PC-3 (cell line): ENCODE measurements at regions of chr4 and their contacts with region 1.

Region 1: GRCh38 chr4:94757192-94758139 is at the start of gene BMPR1B:
- DNase-seq: peak; percentile 65
- ATAC-seq: peak; percentile 10; the same call in 1 of the 2 replicates
- H3K4me3 ChIP-seq: peak within 1 kb of the TSS; percentile 94
- H3K27ac ChIP-seq: peak within 1 kb of the TSS; percentile 78
- H3K4me1 ChIP-seq: peaks cover 23% of the 10 kb centered on the region
- H3K27me3 ChIP-seq: no peaks in the 10 kb centered on the region
- CTCF ChIP-seq: no peak
- total RNA-seq, gene BMPR1B: 5.0 and 7.1 TPM in 2 replicates

Region 2: DNA sequence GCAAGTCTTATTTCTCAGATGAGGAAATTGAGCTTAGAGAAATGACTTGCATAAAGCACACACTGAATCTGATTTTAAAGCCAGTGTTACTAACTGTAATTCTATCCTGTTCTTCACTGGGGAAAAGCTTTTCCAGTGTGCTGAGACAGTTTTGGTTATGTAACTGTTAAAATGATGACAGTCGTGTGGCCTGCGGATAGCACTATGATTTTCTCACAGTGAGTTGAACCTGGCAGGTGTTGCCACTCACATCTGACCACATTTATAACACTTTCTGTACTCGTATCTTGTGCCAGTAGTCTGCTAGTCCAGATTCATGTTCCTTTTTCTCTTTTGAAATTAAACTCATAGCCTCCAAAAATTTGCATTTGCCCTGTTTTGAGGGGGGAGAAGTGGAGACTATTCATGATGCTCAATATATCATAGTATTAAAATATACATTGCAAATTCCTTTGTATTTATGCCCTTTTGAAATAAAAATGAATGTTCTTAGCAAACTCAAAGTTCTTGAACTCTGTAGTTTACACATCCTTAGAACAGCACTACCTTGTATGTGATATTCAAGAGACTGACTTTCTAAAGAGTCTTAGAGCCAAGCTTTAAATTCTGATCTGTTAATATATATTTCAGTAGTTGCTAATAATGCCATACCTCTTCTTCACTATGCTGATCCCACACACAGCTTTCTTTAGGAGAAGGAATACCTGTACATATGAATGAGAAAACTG is 173.4 kb before region 1 on chr4:
- CTCF ChIA-PET with region 1: no interaction called
- POLR2A ChIA-PET with region 1: no interaction called
- intact Hi-C with region 1: no loop called
- DNase-seq: no peak
- ATAC-seq: no peak
- H3K4me3 ChIP-seq: no peak overlapping the region
- H3K27ac ChIP-seq: no peak overlapping the region
- H3K4me1 ChIP-seq: peaks cover 10% of the 10 kb centered on the region
- H3K27me3 ChIP-seq: no peaks in the 10 kb centered on the region
- CTCF ChIP-seq: no peak

Region 3: GRCh38 chr4:94814237-94814636 is 56.8 kb after region 1 on chr4:
- CTCF ChIA-PET with region 1: no interaction called
- POLR2A ChIA-PET with region 1: no interaction called
- intact Hi-C with region 1: no loop called
- DNase-seq: no peak
- ATAC-seq: no peak
- H3K4me3 ChIP-seq: no peak overlapping the region
- H3K27ac ChIP-seq: no peak overlapping the region
- H3K4me1 ChIP-seq: no peaks in the 10 kb centered on the region
- H3K27me3 ChIP-seq: no peaks in the 10 kb centered on the region
- CTCF ChIP-seq: no peak

Region 4: GRCh38 chr4:94833394-94833793 is 75.9 kb after region 1 on chr4:
- CTCF ChIA-PET with region 1: no interaction called
- POLR2A ChIA-PET with region 1: no interaction called
- intact Hi-C with region 1: no loop called
- DNase-seq: no peak
- ATAC-seq: no peak
- H3K4me3 ChIP-seq: no peak overlapping the region
- H3K27ac ChIP-seq: no peak overlapping the region
- H3K4me1 ChIP-seq: peaks cover 10% of the 10 kb centered on the region; the same call in 1 of the 2 replicates
- H3K27me3 ChIP-seq: no peaks in the 10 kb centered on the region
- CTCF ChIP-seq: no peak

Region 5: DNA sequence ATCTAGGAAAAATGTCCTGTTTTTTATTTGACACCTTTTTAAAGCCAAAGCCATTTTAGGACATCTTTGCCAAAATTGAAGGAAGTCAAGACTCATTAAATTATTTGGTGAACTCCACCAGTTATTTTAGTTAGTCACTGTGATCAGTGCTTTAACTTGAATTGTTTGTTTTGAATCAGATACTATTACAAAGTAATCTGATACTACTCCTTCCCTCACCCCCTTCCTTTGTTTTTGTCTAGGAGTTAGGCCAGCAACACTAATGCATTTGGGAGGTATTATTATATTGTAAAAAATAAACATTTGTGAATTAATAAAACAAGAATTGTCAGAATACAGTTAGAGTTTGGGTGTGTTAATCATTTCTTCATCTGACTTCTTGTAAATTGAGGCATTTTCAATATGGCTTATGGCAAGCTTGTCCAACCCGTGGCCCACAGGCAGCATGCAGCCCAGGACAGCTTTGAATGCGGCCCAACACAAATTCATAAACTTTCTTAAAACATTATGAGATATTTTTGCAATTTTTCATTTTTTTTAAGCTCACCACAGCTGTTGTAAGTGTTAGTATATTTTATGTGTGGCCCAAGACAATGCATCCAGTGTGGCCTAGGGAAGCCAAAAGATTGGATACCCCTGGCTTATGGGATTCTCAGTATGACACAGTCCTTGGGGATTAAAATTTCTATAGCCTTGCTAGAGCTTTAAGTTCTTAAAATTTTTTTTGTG is 182.5 kb after region 1 on chr4:
- CTCF ChIA-PET with region 1: no interaction called
- POLR2A ChIA-PET with region 1: no interaction called
- intact Hi-C with region 1: loop called (anchors 1 kb)
- DNase-seq: peak; percentile 68
- ATAC-seq: peak; percentile 86
- H3K4me3 ChIP-seq: no peak overlapping the region
- H3K27ac ChIP-seq: peak overlapping the region; percentile 52
- H3K4me1 ChIP-seq: peaks cover 35% of the 10 kb centered on the region
- H3K27me3 ChIP-seq: no peaks in the 10 kb centered on the region
- CTCF ChIP-seq: no peak

Region 6: GRCh38 chr4:94976371-94977011 is 219.0 kb after region 1 on chr4:
- CTCF ChIA-PET with region 1: no interaction called
- POLR2A ChIA-PET with region 1: interaction called, 4 read pairs
- intact Hi-C with region 1: loop called (anchors 1 kb)
- DNase-seq: peak; percentile 78
- ATAC-seq: peak; percentile 58
- H3K4me3 ChIP-seq: no peak overlapping the region
- H3K27ac ChIP-seq: peak overlapping the region; percentile 96
- H3K4me1 ChIP-seq: peaks cover 34% of the 10 kb centered on the region
- H3K27me3 ChIP-seq: no peaks in the 10 kb centered on the region
- CTCF ChIP-seq: no peak